GM12878 (cell line): ENCODE measurements at regions of chr5 and their contacts with region 1.

Region 1: GRCh38 chr5:146541958-146542849 is 26.2 kb upstream of the GPR151 start:
- DNase-seq: no peak
- ATAC-seq: peak; percentile 100
- H3K4me3 ChIP-seq: no peak overlapping the region
- H3K27ac ChIP-seq: no peak overlapping the region
- H3K4me1 ChIP-seq: no peaks in the 10 kb centered on the region
- H3K27me3 ChIP-seq: no peaks in the 10 kb centered on the region
- CTCF ChIP-seq: peak; percentile 78 to 90 (median 83)
- EP300 ChIP-seq: no peak
- POLR2A ChIP-seq: no peak
- RAD21 ChIP-seq: peak; percentile 86

Region 2: GRCh38 chr5:146359836-146360235 is 182.4 kb before region 1 on chr5:
- CTCF ChIA-PET with region 1: no interaction called
- POLR2A ChIA-PET with region 1: no interaction called
- RAD21 ChIA-PET with region 1: no interaction called
- SMC1A ChIA-PET with region 1: no interaction called
- in situ Hi-C with region 1: no loop called
- intact Hi-C with region 1: no loop called
- DNase-seq: no peak
- ATAC-seq: no peak
- H3K4me3 ChIP-seq: no peak overlapping the region
- H3K27ac ChIP-seq: no peak overlapping the region
- H3K4me1 ChIP-seq: no peaks in the 10 kb centered on the region
- H3K27me3 ChIP-seq: peaks cover 0 to 1% of the 10 kb centered on the region in 2 experiments; a peak in 1 of 4 replicates
- CTCF ChIP-seq: no peak
- EP300 ChIP-seq: no peak
- POLR2A ChIP-seq: no peak
- RAD21 ChIP-seq: no peak

Region 3: DNA sequence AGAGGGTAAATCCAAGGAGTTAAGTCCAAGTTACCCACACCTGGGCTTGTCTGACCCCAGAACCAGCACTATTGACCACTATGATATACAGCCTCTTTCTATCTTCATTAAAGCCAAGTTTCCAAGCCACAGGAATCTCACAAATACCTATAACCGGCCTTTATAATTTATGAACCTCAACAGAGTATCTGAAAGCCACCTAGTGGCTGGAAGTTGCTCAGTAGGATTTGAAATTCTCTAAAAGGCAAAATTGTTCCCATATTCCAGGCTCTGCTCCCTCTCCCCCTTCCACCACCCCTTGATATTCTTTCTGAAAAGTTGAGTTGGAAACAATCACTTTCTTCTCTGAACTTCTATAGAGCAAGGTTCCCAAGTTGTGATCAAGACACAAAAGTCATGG is 80.2 kb after region 1 on chr5:
- CTCF ChIA-PET with region 1: interaction called, 8 read pairs
- POLR2A ChIA-PET with region 1: no interaction called
- RAD21 ChIA-PET with region 1: interaction called, 3 read pairs
- SMC1A ChIA-PET with region 1: no interaction called
- in situ Hi-C with region 1: no loop called
- intact Hi-C with region 1: loop called (anchors 5 kb)
- DNase-seq: no peak
- ATAC-seq: no peak
- H3K4me3 ChIP-seq: no peak overlapping the region
- H3K27ac ChIP-seq: no peak overlapping the region
- H3K4me1 ChIP-seq: no peaks in the 10 kb centered on the region
- H3K27me3 ChIP-seq: no peaks in the 10 kb centered on the region; a peak in 1 of 4 replicates
- CTCF ChIP-seq: peak; percentile 3 to 28 (median 25); a peak in 2 of 6 replicates
- EP300 ChIP-seq: no peak
- POLR2A ChIP-seq: no peak
- RAD21 ChIP-seq: no peak

Region 4: DNA sequence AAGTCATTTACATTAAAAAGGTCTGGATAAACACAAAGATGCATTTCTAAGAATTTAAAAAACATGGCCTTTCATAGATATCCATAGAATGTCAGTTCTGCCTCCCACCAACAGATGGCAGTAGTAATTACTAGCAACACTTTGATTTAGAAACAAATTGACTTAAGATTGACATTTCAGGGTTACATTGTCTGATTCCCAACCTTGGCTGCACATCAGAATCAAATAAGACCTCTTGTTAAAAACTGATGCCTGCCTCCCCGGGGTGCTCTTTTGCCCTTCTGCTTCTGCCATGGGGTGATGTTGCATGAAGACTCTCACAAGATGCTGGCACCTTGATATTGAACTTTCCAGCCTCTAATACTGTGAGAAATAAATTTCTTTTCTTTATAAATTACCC is 120.0 kb after region 1 on chr5:
- CTCF ChIA-PET with region 1: interaction called, 9 read pairs
- POLR2A ChIA-PET with region 1: no interaction called
- RAD21 ChIA-PET with region 1: no interaction called
- SMC1A ChIA-PET with region 1: no interaction called
- in situ Hi-C with region 1: no loop called
- intact Hi-C with region 1: loop called (anchors 5 kb)
- DNase-seq: no peak
- ATAC-seq: no peak
- H3K4me3 ChIP-seq: no peak overlapping the region
- H3K27ac ChIP-seq: no peak overlapping the region
- H3K4me1 ChIP-seq: no peaks in the 10 kb centered on the region
- H3K27me3 ChIP-seq: no peaks in the 10 kb centered on the region
- CTCF ChIP-seq: peak; percentile 44 to 63 (median 52); a peak in 4 of 6 replicates
- EP300 ChIP-seq: no peak
- POLR2A ChIP-seq: no peak
- RAD21 ChIP-seq: peak; percentile 27; the same call in 1 of the 2 replicates